ENCODE measurements at regions of chr11 and their contacts with region 1.

Region 1: GRCh38 chr11:6497069-6497839 is at the start of gene DNHD1:
- DNase-seq: no peak
- H3K4me3 Mint-ChIP-seq: no peak within 1 kb of the TSS
- H3K27ac Mint-ChIP-seq: no peak within 1 kb of the TSS
- H3K4me1 Mint-ChIP-seq: peaks cover 3% of the 10 kb centered on the region
- H3K27me3 Mint-ChIP-seq: no peaks in the 10 kb centered on the region
- total RNA-seq, gene DNHD1: 15.8 to 18.0 TPM

Region 2: DNA sequence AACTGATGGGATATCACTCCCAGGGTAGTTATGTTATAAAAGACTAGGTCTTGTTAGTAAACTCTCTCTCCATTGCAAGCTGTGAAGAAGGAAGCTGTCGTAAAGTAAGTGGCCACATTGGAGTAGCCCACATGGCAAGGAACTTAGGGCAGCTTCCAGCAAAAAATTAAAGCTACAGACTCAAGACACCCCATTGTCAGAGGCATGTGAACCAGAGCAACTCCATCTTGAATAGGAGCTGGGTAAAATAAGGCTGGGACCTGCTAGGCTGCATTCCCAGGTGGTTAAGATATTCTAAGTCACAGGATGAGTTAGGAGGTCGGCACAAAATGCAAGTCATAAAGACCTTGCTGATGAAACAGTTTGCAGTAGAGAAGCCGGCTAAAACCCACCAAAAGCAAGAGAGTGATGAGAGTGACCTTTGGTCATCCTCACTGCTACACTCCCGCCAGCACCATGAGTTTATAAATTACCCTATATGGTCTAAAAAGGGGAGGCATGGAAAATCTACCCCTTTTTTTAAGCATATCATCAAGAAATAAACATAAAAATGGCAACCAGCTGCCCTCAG is 213.7 kb before region 1 on chr11:
- CTCF ChIA-PET with region 1: no interaction called
- POLR2A ChIA-PET with region 1: no interaction called
- DNase-seq: no peak
- H3K4me3 Mint-ChIP-seq: no peak overlapping the region
- H3K27ac Mint-ChIP-seq: no peak overlapping the region
- H3K4me1 Mint-ChIP-seq: no peaks in the 10 kb centered on the region
- H3K27me3 Mint-ChIP-seq: peaks cover 58% of the 10 kb centered on the region

Region 3: DNA sequence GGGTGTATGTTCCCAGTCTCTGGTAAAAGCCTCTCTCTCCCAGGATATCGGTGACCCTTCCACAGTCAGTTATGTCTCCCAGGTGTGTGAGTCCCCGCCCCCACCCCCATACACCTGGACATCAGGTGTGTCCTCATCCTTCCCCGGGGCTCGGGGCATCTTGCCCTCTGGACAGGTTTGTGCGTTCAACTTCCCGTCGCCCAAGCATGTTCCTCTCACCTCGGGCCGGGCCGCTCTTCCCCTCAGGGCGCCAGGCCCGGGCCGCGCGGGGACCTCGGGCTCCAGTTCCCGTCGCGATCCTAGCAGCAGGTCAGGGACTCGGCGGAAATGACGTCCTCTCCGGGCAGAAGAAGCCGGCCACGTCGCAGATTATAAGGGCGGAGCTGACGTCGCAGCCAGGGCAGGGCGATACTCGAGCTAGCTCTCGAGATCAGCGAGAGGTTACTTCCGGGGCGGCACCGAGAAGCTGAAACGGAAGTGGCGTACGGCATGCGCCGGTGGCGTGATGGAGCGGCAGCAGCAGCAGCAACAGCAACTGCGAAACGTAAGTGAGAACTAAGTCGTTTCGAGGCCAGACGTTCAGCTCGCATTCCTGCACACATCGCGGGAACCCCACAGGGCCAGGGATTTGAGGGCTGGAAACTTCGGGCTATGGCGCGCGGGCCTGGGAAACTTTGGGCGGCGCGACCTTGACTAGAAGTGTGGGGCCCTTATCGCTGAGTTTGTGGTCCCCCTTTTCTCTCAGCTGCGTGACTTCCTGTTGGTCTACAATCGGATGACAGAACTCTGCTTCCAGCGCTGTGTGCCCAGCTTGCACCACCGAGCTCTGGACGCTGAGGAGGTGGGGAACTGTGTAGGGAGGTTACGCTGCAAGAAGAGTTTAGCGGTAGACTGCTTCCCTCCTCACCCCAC is 16.0 kb before region 1 on chr11 and contains the starts of genes ARFIP2 and TIMM10B:
- CTCF ChIA-PET with region 1: interaction called, 12 read pairs
- POLR2A ChIA-PET with region 1: interaction called, 6 read pairs
- DNase-seq: peak; percentile 98
- H3K4me3 Mint-ChIP-seq: peak within 1 kb of the TSS; percentile 82
- H3K27ac Mint-ChIP-seq: peak within 1 kb of the TSS; percentile 93
- H3K4me1 Mint-ChIP-seq: peaks cover 37% of the 10 kb centered on the region
- H3K27me3 Mint-ChIP-seq: no peaks in the 10 kb centered on the region
- total RNA-seq, gene ARFIP2: 39.0 to 40.6 TPM
- total RNA-seq, gene TIMM10B: 25.6 to 27.0 TPM

Region 4: GRCh38 chr11:6667733-6668374 is 170.6 kb after region 1 on chr11:
- CTCF ChIA-PET with region 1: no interaction called
- POLR2A ChIA-PET with region 1: no interaction called
- DNase-seq: peak; percentile 46
- H3K4me3 Mint-ChIP-seq: no peak overlapping the region
- H3K27ac Mint-ChIP-seq: peak overlapping the region; percentile 54
- H3K4me1 Mint-ChIP-seq: peaks cover 63% of the 10 kb centered on the region
- H3K27me3 Mint-ChIP-seq: peaks cover 3% of the 10 kb centered on the region

Measured in activated CD4-positive, alpha-beta T cell treated with anti-CD3 and anti-CD28 coated beads, Interleukin-2, amount 10 ng/mL, durations not matched to agents 7 days and 5 days (primary cell).